ENCODE measurements at regions of chr3 and their contacts with region 1.

Region 1: DNA sequence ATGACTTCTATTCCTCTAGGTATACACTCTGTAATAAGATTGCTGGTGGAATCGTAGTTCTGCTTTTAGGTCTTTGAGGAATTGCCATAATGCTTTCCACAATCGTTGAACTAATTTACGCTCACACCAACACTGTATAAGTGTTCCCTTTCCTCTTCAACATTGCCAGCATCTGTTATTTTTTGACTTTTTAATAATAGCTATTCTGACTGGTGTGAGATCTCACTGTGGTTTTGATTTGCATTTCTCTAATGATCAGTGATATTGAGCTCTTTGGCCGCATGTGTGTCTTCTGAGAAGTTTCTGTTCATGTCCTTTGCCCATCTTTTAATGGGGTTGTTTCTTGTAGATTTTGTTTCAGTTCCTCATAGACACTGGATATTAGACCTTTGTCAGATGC is 12.8 kb downstream of the NXPE3 start:
- DNase-seq: no peak
- H3K4me3 ChIP-seq: no peak overlapping the region
- H3K27me3 ChIP-seq: no peaks in the 10 kb centered on the region
- CTCF ChIP-seq: no peak

Region 2: DNA sequence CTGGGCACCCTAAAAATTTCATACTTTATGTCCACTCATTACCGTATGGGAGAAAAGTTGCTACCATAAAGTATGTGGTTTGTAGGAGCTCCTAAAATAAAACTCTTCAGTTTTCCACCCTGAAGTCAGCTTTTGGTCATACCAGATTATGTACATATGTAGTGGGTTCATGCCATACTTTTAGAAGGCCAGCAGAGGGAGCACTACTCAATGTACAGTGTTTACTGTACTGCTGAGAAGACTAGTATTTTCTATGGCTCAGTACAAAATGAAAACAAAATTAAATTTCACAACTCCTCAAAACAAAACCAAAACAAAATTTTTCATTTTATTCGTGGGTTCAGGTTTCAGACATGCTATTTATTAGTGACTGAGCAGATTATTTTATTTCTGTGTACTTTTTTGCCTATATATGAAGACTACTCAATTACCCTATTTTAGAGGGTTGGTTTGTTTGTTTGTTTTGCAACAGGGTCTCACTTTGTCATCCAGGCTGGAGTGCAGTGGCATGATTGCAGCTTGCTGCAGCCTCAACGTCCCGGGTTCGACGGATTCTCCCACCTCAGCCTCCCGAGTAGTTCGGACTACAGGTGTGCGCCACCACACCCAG is 11.5 kb after region 1 on chr3:
- CTCF ChIA-PET with region 1: interaction called, 11 read pairs
- POLR2A ChIA-PET with region 1: no interaction called
- DNase-seq: no peak
- H3K4me3 ChIP-seq: no peak overlapping the region
- H3K27me3 ChIP-seq: no peaks in the 10 kb centered on the region
- CTCF ChIP-seq: peak; percentile 81